K562 (cell line): ENCODE measurements at regions of chr7 and their contacts with region 1.

Region 1: GRCh38 chr7:22809902-22810642 is 12.6 kb downstream of the TOMM7 start:
- DNase-seq: no peak
- ATAC-seq: no peak
- H3K4me3 ChIP-seq: no peak overlapping the region
- H3K27ac ChIP-seq: no peak overlapping the region
- H3K4me1 ChIP-seq: peaks cover 0 to 5% of the 10 kb centered on the region in 2 experiments; a peak in 2 of 5 replicates
- H3K27me3 ChIP-seq: no peaks in the 10 kb centered on the region
- CTCF ChIP-seq: no peak
- EP300 ChIP-seq: no peak
- POLR2A ChIP-seq: no peak
- RAD21 ChIP-seq: no peak

Region 2: GRCh38 chr7:22822486-22823141 is 12.5 kb after region 1 on chr7 and contains the start of gene TOMM7:
- CTCF ChIA-PET with region 1: no interaction called
- POLR2A ChIA-PET with region 1: interaction called, 12 read pairs
- in situ Hi-C with region 1: no loop called
- intact Hi-C with region 1: no loop called
- DNase-seq: peak; percentile 93 to 98 (median 94)
- ATAC-seq: peak; percentile 87
- H3K4me3 ChIP-seq: peak within 1 kb of the TSS; percentile 56
- H3K27ac ChIP-seq: peak within 1 kb of the TSS; percentile 84
- H3K4me1 ChIP-seq: peaks cover 17 to 27% of the 10 kb centered on the region in 2 experiments; a peak in 4 of 5 replicates
- H3K27me3 ChIP-seq: no peaks in the 10 kb centered on the region
- CTCF ChIP-seq: peak; percentile 21 to 32 (median 32); a peak in 3 of 6 replicates
- EP300 ChIP-seq: no peak
- POLR2A ChIP-seq: peak; percentile 89
- RAD21 ChIP-seq: no peak
- polyA plus RNA-seq, gene TOMM7: 787 to 797 TPM